PC-3 (cell line): ENCODE measurements at regions of chr2 and their contacts with region 1.

Region 1: DNA sequence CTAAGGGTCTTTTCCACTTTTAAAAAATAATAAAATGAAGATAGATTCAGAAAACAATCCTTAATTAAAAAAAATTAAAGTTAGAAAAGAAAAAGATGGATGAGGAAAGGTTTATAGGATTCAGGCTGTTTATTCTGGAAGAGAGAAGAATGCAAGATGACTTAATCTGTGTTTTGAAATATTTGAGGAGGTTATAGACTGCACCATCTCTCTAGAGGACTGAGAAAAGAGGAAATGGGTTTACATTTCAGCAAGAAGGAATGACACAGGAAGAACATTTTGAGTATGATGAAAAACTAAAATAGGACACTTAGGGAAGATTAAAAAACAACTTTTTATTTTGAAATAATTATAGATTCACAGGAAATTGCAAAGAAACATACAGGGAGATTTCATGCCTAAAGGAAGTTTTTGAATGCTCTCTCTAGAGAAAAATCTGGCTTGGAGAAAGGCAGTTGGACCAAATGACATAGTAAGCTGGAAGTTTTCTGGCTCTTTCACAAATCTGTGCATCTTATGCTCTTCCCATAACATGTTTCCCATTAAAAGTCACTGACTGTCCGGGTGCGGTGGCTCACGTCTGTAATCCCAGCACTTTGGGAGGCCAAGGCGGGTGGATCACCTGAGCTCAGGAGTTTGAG is 75.0 kb downstream of the CERS6 start:
- DNase-seq: no peak
- ATAC-seq: no peak
- H3K4me3 ChIP-seq: no peak overlapping the region
- H3K27ac ChIP-seq: no peak overlapping the region
- H3K4me1 ChIP-seq: peaks cover 34% of the 10 kb centered on the region
- H3K27me3 ChIP-seq: no peaks in the 10 kb centered on the region
- CTCF ChIP-seq: no peak

Region 2: GRCh38 chr2:168278424-168278888 is 252.6 kb before region 1 on chr2:
- CTCF ChIA-PET with region 1: no interaction called
- POLR2A ChIA-PET with region 1: interaction called, 10 read pairs
- intact Hi-C with region 1: no loop called
- DNase-seq: peak; percentile 70
- ATAC-seq: peak; percentile 90
- H3K4me3 ChIP-seq: no peak overlapping the region
- H3K27ac ChIP-seq: no peak overlapping the region; the same call in 1 of the 2 replicates
- H3K4me1 ChIP-seq: peaks cover 14% of the 10 kb centered on the region
- H3K27me3 ChIP-seq: no peaks in the 10 kb centered on the region
- CTCF ChIP-seq: no peak

Region 3: DNA sequence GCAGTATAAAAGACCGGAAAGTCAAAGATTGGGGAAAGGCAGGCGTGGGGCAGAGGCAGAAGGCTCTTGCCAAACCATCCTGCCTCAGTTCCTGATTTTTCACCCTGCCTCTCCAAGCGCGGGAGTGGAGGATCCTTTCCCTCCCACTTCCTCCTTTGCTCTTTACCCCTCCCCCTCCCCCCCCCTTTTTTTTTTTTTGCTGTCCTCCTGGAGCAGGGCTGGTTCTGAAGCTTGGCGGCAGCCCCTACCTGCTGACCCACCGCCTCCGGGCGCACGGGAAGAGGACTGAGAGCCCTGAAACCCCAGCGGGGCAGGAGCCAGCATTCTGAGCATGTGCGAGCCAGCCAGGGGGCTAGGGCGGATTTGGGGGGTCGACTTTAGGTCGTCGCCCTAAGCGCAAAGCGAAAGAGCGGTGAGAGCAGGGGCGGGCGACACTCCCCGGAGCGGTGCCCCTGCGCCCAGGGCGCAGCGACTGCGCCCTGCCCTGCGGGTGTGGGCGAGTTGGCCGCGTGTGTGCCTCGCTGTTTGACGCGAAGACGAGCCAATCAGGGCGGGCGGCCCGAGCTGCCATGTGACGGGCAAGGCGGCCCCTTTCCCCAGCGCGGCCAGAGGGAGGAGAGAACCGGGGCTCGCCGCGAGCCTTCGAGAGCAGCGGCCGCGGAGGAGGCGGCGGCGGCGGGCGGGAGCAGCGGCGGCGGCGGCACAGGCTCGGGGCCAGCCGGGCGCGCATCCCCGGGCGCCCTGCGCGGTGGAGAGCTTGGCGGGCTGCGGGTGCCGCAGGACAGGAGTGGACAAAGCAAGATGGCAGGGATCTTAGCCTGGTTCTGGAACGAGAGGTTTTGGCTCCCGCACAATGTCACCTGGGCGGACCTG is 75.2 kb before region 1 on chr2 and contains the start of gene CERS6:
- CTCF ChIA-PET with region 1: no interaction called
- POLR2A ChIA-PET with region 1: no interaction called
- intact Hi-C with region 1: loop called (anchors 5 kb)
- DNase-seq: peak; percentile 93
- ATAC-seq: peak; percentile 93
- H3K4me3 ChIP-seq: peak within 1 kb of the TSS; percentile 77
- H3K27ac ChIP-seq: peak within 1 kb of the TSS; percentile 12; the same call in 1 of the 2 replicates
- H3K4me1 ChIP-seq: peaks cover 18% of the 10 kb centered on the region
- H3K27me3 ChIP-seq: no peaks in the 10 kb centered on the region
- CTCF ChIP-seq: no peak
- total RNA-seq, gene CERS6: 24.2 and 25.9 TPM in 2 replicates

Region 4: GRCh38 chr2:168583064-168583709 is 52.1 kb after region 1 on chr2:
- CTCF ChIA-PET with region 1: no interaction called
- POLR2A ChIA-PET with region 1: no interaction called
- intact Hi-C with region 1: loop called (anchors 5 kb)
- DNase-seq: no peak
- ATAC-seq: peak; percentile 11
- H3K4me3 ChIP-seq: peak overlapping the region; percentile 36
- H3K27ac ChIP-seq: peak overlapping the region; percentile 88
- H3K4me1 ChIP-seq: peaks cover 35% of the 10 kb centered on the region
- H3K27me3 ChIP-seq: no peaks in the 10 kb centered on the region
- CTCF ChIP-seq: no peak